ENCODE measurements at regions of chr6 and their contacts with region 1.

Region 1: GRCh38 chr6:35096129-35096862 is 44.8 kb downstream of the TCP11 start:
- DNase-seq: peak; percentile 81
- ATAC-seq: peak; percentile 59
- H3K4me3 ChIP-seq: no peak overlapping the region
- H3K27ac ChIP-seq: no peak overlapping the region
- H3K4me1 ChIP-seq: peaks cover 23% of the 10 kb centered on the region
- H3K27me3 ChIP-seq: no peaks in the 10 kb centered on the region
- CTCF ChIP-seq: no peak
- POLR2A ChIP-seq: no peak
- RAD21 ChIP-seq: no peak

Region 2: GRCh38 chr6:35064757-35065440 is 31.4 kb before region 1 on chr6:
- CTCF ChIA-PET with region 1: no interaction called
- POLR2A ChIA-PET with region 1: no interaction called
- dilution Hi-C with region 1: no loop called
- in situ Hi-C with region 1: no loop called
- intact Hi-C with region 1: loop called (anchors 2 kb)
- DNase-seq: no peak
- ATAC-seq: no peak
- H3K4me3 ChIP-seq: no peak overlapping the region
- H3K27ac ChIP-seq: no peak overlapping the region
- H3K4me1 ChIP-seq: peaks cover 3% of the 10 kb centered on the region
- H3K27me3 ChIP-seq: no peaks in the 10 kb centered on the region
- CTCF ChIP-seq: no peak
- POLR2A ChIP-seq: no peak
- RAD21 ChIP-seq: no peak